Panc1 (cell line): ENCODE measurements at regions of chr1 and their contacts with region 1.

Region 1: DNA sequence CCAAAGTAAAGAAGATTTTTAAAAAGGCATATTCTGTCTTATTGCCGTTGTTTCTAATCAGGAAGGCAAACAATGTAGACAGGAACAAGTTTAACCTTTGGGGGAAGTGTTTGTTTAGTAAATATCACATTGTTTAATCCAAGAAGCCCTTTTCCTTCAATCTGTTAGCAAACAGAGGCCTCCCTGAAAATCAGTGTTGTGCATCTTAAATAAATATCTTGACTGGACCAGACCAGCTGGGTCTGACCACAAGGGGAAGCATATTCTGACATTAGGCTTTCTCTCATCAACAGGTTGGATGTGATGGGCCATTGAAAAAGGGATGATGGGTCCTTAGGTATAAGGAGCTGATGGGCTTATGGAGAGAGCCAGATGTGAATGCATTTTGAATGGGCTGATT is 81.8 kb upstream of the SGIP1 start:
- DNase-seq: no peak
- ATAC-seq: no peak
- H3K4me3 ChIP-seq: no peak overlapping the region
- H3K27ac ChIP-seq: no peak overlapping the region
- H3K4me1 ChIP-seq: no peaks in the 10 kb centered on the region
- H3K27me3 ChIP-seq: no peaks in the 10 kb centered on the region
- CTCF ChIP-seq: peak; percentile 16; the same call in 1 of the 2 replicates

Region 2: GRCh38 chr1:65581119-65581518 is 871.0 kb before region 1 on chr1:
- CTCF ChIA-PET with region 1: no interaction called
- POLR2A ChIA-PET with region 1: no interaction called
- in situ Hi-C with region 1: no loop called
- intact Hi-C with region 1: no loop called
- DNase-seq: no peak
- ATAC-seq: no peak
- H3K4me3 ChIP-seq: no peak overlapping the region
- H3K27ac ChIP-seq: no peak overlapping the region
- H3K4me1 ChIP-seq: no peaks in the 10 kb centered on the region
- H3K27me3 ChIP-seq: no peaks in the 10 kb centered on the region
- CTCF ChIP-seq: no peak; the same call in 1 of the 2 replicates

Region 3: GRCh38 chr1:66725885-66726665 is 273.9 kb after region 1 on chr1:
- CTCF ChIA-PET with region 1: no interaction called
- POLR2A ChIA-PET with region 1: no interaction called
- in situ Hi-C with region 1: no loop called
- intact Hi-C with region 1: loop called (anchors 10 kb)
- DNase-seq: peak; percentile 70
- ATAC-seq: peak; percentile 73
- H3K4me3 ChIP-seq: no peak overlapping the region
- H3K27ac ChIP-seq: no peak overlapping the region
- H3K4me1 ChIP-seq: no peaks in the 10 kb centered on the region
- H3K27me3 ChIP-seq: no peaks in the 10 kb centered on the region
- CTCF ChIP-seq: peak; percentile 94